ENCODE measurements at regions of chr7 and their contacts with region 1.

Region 1: GRCh38 chr7:13524076-13524475 is 465.4 kb downstream of the ETV1 start:
- DNase-seq: no peak
- H3K4me3 Mint-ChIP-seq: no peak overlapping the region
- H3K27ac Mint-ChIP-seq: no peak overlapping the region
- H3K4me1 Mint-ChIP-seq: no peaks in the 10 kb centered on the region
- H3K27me3 Mint-ChIP-seq: no peaks in the 10 kb centered on the region

Region 2: DNA sequence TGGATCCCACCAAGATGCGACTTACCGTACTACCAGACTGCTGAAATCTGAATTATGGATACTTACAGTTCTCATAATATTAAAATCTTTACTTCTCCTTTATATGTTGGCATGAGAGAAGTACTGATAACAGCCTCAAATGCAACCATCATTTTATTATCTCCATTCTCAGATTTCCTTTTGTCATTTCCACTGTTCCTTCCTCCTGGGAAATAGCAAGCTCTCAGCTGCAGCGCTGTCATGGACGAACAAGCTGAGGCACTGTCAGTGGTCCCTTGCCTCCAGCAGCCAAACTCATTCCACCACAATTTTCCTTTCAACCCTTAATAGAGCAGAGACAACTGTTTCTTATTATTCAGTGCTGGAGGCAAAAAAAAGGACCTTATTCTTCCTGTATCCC is 358.2 kb before region 1 on chr7:
- CTCF ChIA-PET with region 1: no interaction called
- intact Hi-C with region 1: no loop called
- DNase-seq: no peak
- H3K4me3 Mint-ChIP-seq: no peak overlapping the region
- H3K27ac Mint-ChIP-seq: no peak overlapping the region
- H3K4me1 Mint-ChIP-seq: no peaks in the 10 kb centered on the region
- H3K27me3 Mint-ChIP-seq: peaks cover 18% of the 10 kb centered on the region

Region 3: DNA sequence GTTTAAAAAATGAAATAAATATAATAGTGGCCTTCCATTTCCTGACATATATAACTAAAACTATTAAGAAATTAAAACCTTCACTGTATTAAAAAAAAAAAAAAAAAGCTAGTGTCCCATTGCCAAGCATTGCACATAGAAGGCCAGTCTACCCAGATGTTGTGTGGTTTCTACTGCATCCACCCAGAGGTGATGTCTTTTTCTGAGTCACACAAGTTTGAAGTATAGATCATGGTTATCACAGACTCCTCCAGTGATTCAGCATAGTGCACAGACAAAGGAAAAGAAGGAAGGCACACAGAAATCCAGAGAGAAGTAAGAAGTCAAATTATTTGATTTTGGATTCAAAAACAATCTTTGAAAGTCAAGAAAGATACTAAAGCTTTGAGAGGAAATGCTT is 36.4 kb after region 1 on chr7:
- CTCF ChIA-PET with region 1: no interaction called
- intact Hi-C with region 1: no loop called
- DNase-seq: no peak
- H3K4me3 Mint-ChIP-seq: no peak overlapping the region
- H3K27ac Mint-ChIP-seq: no peak overlapping the region
- H3K4me1 Mint-ChIP-seq: no peaks in the 10 kb centered on the region
- H3K27me3 Mint-ChIP-seq: no peaks in the 10 kb centered on the region

Region 4: GRCh38 chr7:13742811-13743210 is 218.7 kb after region 1 on chr7:
- CTCF ChIA-PET with region 1: interaction called, 4 read pairs
- intact Hi-C with region 1: loop called (anchors 1 kb)
- DNase-seq: peak; percentile 14
- H3K4me3 Mint-ChIP-seq: no peak overlapping the region
- H3K27ac Mint-ChIP-seq: no peak overlapping the region
- H3K4me1 Mint-ChIP-seq: no peaks in the 10 kb centered on the region
- H3K27me3 Mint-ChIP-seq: peaks cover 2% of the 10 kb centered on the region

Region 5: GRCh38 chr7:14457568-14458453 is 933.7 kb after region 1 on chr7:
- CTCF ChIA-PET with region 1: no interaction called
- intact Hi-C with region 1: loop called (anchors 2 kb)
- DNase-seq: peak; percentile 56
- H3K4me3 Mint-ChIP-seq: no peak overlapping the region
- H3K27ac Mint-ChIP-seq: no peak overlapping the region
- H3K4me1 Mint-ChIP-seq: no peaks in the 10 kb centered on the region
- H3K27me3 Mint-ChIP-seq: no peaks in the 10 kb centered on the region

Region 6: GRCh38 chr7:14691597-14692203 is 1167.6 kb after region 1 on chr7:
- CTCF ChIA-PET with region 1: no interaction called
- intact Hi-C with region 1: loop called (anchors 1 kb)
- DNase-seq: peak; percentile 59
- H3K4me3 Mint-ChIP-seq: no peak overlapping the region
- H3K27ac Mint-ChIP-seq: no peak overlapping the region
- H3K4me1 Mint-ChIP-seq: no peaks in the 10 kb centered on the region
- H3K27me3 Mint-ChIP-seq: no peaks in the 10 kb centered on the region

Measured in activated naive CD4-positive, alpha-beta T cell treated with anti-CD3 and anti-CD28 coated beads for 36 hours (primary cell).